ENCODE measurements at regions of chr16 and their contacts with region 1.

Region 1: DNA sequence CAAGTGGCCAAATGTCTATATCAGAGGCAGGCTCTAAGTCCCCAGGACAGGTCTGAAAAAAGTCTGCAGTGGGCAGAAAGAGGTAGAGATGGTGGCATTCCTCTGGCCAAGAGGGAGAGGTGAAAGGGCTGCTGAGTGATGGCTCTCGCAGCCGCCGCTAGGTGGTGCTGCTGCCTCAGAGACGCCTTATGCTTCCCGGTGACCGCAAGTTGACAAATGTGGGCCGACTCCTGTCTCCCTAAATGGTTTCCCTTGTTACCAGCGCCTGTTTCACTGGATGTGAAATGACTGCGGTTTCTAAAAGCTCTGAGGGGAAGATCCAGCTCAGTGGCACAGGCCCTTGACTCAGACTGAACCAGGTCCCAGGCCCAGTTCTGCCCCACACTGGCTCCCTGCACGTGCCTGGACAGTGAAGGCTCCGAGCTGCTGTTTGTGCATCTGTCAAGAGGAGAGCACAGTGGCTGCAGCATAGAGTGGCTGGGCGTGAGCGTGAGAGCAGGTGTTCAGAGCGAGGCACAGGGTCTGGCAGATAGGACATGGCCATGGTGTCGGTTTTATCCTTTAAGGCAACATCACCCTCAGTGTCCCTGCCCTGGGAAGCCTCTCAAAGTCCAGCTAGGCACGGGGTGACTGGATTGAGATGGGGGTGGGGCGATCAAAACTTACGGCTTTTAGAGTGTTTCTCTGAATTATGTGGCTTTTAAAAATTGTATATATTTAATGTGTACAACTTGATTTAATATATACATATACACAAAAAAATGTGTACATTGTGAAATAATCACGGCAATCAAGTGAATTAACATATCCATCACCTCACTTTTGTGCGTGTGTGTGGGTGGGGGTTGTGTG is 19.9 kb downstream of the CLEC16A start:
- DNase-seq: peak; percentile 95
- H3K4me3 Mint-ChIP-seq: peak overlapping the region; percentile 74
- H3K27ac Mint-ChIP-seq: peak overlapping the region; percentile 97
- H3K4me1 Mint-ChIP-seq: peaks cover 53% of the 10 kb centered on the region
- H3K27me3 Mint-ChIP-seq: no peaks in the 10 kb centered on the region

Region 2: DNA sequence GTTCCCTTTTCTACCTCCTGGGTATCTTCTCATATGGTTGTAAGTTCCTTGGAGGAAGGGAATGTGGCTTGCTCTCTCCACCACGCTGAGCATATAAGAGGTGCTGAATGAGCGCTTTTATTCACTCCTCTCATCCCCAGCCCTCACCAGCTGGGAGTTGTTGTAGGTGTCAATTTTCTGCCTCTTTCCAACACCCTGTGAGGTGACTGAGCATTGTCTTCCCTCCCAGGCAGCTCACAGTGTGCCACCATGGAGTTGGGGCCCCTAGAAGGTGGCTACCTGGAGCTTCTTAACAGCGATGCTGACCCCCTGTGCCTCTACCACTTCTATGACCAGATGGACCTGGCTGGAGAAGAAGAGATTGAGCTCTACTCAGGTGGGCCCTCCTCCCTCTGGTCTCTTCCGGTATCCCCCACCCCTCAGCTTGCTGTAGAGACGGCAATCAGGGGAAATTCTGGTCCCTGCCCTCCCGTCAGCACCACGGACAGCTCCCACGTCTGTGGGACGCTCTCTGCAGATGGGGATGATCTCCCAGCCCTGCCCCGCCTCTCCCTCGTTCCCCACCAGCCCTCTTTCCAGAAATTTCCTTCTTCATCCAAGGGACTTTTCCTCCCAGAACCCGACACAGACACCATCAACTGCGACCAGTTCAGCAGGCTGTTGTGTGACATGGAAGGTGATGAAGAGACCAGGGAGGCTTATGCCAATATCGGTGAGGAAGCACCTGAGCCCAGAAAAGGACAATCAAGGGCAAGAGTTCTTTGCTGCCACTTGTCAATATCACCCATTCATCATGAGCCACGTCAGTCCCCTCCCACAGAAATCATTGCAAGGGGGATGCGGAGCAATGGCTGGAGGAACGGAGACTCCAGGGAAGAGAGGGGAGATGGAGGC is 69.0 kb before region 1 on chr16:
- intact Hi-C with region 1: no loop called
- DNase-seq: peak; percentile 83
- H3K4me3 Mint-ChIP-seq: no peak overlapping the region
- H3K27ac Mint-ChIP-seq: no peak overlapping the region
- H3K4me1 Mint-ChIP-seq: peaks cover 3% of the 10 kb centered on the region
- H3K27me3 Mint-ChIP-seq: peaks cover 3% of the 10 kb centered on the region

Region 3: DNA sequence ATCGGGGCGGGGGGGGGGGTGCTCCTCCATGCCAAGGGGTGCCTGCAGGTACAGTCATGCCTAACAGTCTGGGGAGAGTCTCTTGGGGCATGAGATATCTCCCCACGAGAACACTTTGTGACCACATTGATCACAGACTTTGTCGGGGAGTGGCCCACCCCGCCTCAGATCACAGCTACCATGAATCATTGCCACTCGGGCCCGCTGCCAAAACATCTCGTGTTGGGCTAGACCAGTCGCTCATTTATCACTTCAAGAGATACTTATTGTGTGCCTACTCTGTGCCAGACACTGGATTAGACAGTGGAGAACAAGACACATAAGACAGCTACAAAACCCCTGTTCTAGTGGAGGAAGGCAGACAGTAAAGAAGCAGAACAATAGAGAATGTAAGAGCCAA is 52.7 kb after region 1 on chr16:
- intact Hi-C with region 1: no loop called
- DNase-seq: no peak
- H3K4me3 Mint-ChIP-seq: no peak overlapping the region
- H3K27ac Mint-ChIP-seq: no peak overlapping the region
- H3K4me1 Mint-ChIP-seq: peaks cover 17% of the 10 kb centered on the region
- H3K27me3 Mint-ChIP-seq: no peaks in the 10 kb centered on the region

Region 4: GRCh38 chr16:11051879-11052808 is 87.9 kb after region 1 on chr16:
- intact Hi-C with region 1: loop called (anchors 1 kb)
- DNase-seq: peak; percentile 93
- H3K4me3 Mint-ChIP-seq: peak overlapping the region; percentile 46
- H3K27ac Mint-ChIP-seq: peak overlapping the region; percentile 89
- H3K4me1 Mint-ChIP-seq: peaks cover 77% of the 10 kb centered on the region
- H3K27me3 Mint-ChIP-seq: no peaks in the 10 kb centered on the region

Region 5: DNA sequence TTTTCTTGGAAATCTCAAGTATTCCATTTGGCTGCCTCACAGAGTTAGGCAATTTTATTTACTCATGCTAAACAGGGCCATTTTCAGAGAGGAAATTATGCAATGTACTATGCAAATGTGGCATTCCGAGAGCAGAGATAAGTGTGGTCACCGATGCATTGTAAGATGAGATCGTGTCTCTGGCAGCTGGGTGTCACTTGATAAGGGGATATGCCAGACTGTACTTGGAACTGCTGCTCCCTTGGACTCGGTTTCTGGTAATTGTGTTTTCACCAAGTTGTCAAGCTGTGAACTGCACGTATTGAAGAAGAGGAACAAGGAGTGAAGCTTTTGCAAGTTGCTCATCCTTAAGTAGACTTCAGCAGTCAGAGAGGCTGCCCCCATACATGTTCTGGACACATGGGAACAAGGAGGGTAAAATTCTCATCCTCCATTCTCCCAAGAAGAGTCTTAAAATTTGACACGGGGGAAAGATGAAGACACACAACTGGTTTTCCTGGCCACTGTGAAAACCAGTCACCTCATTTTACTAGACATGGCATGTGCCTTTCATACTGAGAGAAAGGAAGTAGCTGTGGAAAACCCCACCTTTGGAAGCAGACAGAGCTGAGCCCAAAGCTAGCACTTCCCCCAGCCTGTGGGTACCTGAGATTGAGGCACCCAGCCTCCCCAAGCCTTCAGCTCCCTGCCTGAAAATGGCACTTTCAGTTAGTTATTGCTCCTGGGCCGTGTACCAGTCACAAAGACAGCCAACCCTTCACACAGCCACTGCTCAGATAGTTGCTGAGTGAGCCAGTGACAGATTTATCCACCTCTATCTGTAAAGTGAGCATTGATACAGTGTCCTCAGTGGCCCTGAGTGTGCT is 141.0 kb after region 1 on chr16:
- intact Hi-C with region 1: loop called (anchors 1 kb)
- DNase-seq: peak; percentile 84
- H3K4me3 Mint-ChIP-seq: peak overlapping the region; percentile 73
- H3K27ac Mint-ChIP-seq: peak overlapping the region; percentile 92
- H3K4me1 Mint-ChIP-seq: peaks cover 65% of the 10 kb centered on the region
- H3K27me3 Mint-ChIP-seq: no peaks in the 10 kb centered on the region

Region 6: DNA sequence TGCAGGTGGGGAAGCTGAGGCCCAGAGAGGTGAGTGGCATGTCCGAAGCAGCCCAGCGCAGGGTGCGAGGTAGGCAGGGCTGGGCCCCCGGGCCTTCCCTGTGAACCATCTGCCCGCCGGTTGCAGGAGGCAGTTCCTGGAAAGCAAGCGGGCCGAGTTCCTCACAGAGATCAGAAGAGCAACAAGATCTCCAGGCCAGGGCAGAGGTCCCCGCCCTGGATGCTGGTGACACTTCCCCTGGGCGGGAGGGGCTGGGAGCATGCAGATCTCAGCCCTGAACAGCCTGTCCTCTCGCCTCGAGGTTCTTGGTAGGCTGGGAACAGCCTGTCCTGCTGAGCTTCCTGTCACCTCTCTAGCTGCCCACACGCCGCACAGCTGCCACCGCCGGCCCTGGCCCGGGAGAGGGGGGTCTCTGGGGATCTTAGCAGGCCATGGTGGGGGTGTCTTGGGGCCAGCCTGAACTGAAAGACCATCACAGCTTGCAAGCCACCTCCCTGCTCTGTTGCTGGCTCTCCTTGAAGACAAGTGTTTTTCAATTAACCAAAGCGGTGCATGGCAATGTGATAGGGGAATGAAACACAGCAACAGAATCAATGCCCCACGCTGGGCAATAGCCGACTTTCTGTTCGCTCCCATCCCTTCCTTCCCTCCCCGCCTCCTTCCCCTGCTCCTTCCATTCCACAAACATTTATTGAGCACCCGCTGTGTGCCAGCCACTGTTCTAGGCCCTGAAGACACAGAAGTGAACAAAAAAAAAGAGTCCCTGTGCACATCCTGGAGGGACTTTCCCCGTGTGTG is 260.0 kb after region 1 on chr16:
- intact Hi-C with region 1: loop called (anchors 1 kb)
- DNase-seq: peak; percentile 92
- H3K4me3 Mint-ChIP-seq: peak overlapping the region; percentile 86
- H3K27ac Mint-ChIP-seq: peak overlapping the region; percentile 100
- H3K4me1 Mint-ChIP-seq: peaks cover 56% of the 10 kb centered on the region
- H3K27me3 Mint-ChIP-seq: no peaks in the 10 kb centered on the region

Region 7: GRCh38 chr16:11356573-11357331 is 392.5 kb after region 1 on chr16:
- intact Hi-C with region 1: loop called (anchors 2 kb)
- DNase-seq: peak; percentile 85
- H3K4me3 Mint-ChIP-seq: peak overlapping the region; percentile 37
- H3K27ac Mint-ChIP-seq: peak overlapping the region; percentile 20
- H3K4me1 Mint-ChIP-seq: peaks cover 63% of the 10 kb centered on the region
- H3K27me3 Mint-ChIP-seq: peaks cover 13% of the 10 kb centered on the region

Region 8: GRCh38 chr16:11586856-11587642 is 622.8 kb after region 1 on chr16 and contains the start of gene LITAF:
- intact Hi-C with region 1: loop called (anchors 10 kb)
- DNase-seq: peak; percentile 87
- H3K4me3 Mint-ChIP-seq: peak within 1 kb of the TSS; percentile 90
- H3K27ac Mint-ChIP-seq: peak within 1 kb of the TSS; percentile 89
- H3K4me1 Mint-ChIP-seq: peaks cover 38% of the 10 kb centered on the region
- H3K27me3 Mint-ChIP-seq: peaks cover 3% of the 10 kb centered on the region
- total RNA-seq, gene LITAF: 163 and 170 TPM in 2 replicates

Measured in activated CD4-positive, alpha-beta T cell treated with anti-CD3 and anti-CD28 coated beads, Interleukin-2, amount 10 ng/mL, durations not matched to agents 24 days and 14 days (primary cell).